Prostate gland (tissue), 2 donors: ENCODE measurements at regions of chr2 and their contacts with region 1.

Region 1: DNA sequence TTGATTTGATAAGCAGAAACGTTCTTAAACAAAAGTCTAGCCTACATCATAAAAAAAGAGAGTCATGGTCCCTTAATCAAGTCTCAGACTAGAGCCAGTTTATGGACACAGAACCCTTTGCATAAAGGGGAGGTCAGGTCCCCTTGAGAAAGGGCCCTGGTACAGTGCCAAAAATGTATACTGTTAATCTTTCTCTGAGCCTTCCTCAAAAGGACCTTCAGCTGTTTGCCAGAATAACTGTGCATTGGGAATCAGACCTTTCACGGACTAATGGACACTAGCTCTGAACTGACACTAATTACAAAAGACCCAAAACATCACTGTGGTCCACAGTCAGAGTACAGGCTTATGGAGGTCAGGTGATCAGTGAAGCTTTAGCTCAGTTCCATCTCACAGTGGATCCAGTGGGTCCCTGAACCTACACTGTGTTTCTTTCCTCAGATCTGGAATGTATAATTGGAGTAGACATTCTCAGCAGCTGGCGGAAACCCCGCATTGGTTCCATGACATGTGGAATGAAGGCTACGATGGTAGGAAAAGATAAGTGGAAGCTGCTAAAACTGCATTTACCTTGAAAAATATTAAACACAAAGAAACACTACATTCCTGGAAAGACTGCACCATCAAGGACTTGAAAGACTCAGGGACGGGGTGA is 151.4 kb downstream of the TMEFF2 start:
- DNase-seq: no peak
- H3K4me3 ChIP-seq: no peak overlapping the region
- H3K27ac ChIP-seq: no peak overlapping the region
- H3K4me1 ChIP-seq: no peaks in the 10 kb centered on the region
- H3K27me3 ChIP-seq: no peaks in the 10 kb centered on the region
- CTCF ChIP-seq: no peak
- POLR2A ChIP-seq: no peak

Region 2: DNA sequence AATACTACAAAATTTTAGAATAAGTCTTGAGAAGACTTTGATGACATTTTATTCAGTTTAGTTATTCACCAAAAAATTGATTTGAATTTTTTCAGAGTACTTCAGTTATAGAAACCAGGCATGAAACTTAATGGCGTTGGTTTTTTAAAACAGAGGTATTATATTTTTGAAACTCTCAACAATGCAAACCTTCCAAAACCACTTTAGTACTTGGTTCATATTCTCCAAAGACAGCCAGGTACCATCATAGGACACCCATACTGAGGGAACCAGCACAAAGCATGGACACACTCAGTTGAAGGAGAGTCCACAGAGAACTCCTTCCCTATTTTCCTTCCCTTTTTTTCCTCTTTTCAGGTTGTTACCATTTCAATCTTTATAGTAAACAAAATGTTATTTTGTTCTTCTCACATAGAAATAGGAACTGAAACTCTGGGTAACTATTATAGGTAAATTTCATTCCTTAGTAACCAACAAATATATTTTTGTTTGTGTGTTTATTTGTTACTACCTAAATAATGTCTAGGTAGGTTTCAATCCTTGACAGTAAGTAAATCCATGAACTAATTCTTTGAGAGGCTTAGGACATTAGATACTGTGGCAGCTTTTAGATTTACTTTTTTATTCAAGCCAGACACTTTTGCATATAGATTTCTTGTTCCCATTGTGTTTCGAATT is 55.6 kb after region 1 on chr2:
- intact Hi-C with region 1: loop called (anchors 2 kb)
- DNase-seq: no peak
- H3K4me3 ChIP-seq: no peak overlapping the region
- H3K27ac ChIP-seq: no peak overlapping the region
- H3K4me1 ChIP-seq: no peaks in the 10 kb centered on the region
- H3K27me3 ChIP-seq: no peaks in the 10 kb centered on the region
- CTCF ChIP-seq: no peak
- POLR2A ChIP-seq: no peak